B cell (primary cell): ENCODE measurements at regions of chr10 and their contacts with region 1.

Region 1: GRCh38 chr10:18625886-18626285 is 25.5 kb downstream of the NSUN6 start:
- DNase-seq: no peak
- ATAC-seq: no peak
- H3K4me3 ChIP-seq: no peak overlapping the region
- H3K4me3 Mint-ChIP-seq: peak overlapping the region; percentile 39
- H3K27ac ChIP-seq: no peak overlapping the region
- H3K27ac Mint-ChIP-seq: no peak overlapping the region
- H3K4me1 ChIP-seq: no peaks in the 10 kb centered on the region
- H3K4me1 Mint-ChIP-seq: peaks cover 10% of the 10 kb centered on the region
- H3K27me3 ChIP-seq: no peaks in the 10 kb centered on the region
- H3K27me3 Mint-ChIP-seq: no peaks in the 10 kb centered on the region
- CTCF ChIP-seq: no peak

Region 2: GRCh38 chr10:18523025-18523424 is 102.9 kb before region 1 on chr10:
- CTCF ChIA-PET with region 1: no interaction called
- POLR2A ChIA-PET with region 1: interaction called, 12 read pairs
- intact Hi-C with region 1: no loop called
- DNase-seq: no peak
- ATAC-seq: no peak
- H3K4me3 ChIP-seq: no peak overlapping the region
- H3K4me3 Mint-ChIP-seq: no peak overlapping the region
- H3K27ac ChIP-seq: no peak overlapping the region
- H3K27ac Mint-ChIP-seq: no peak overlapping the region
- H3K4me1 ChIP-seq: no peaks in the 10 kb centered on the region
- H3K4me1 Mint-ChIP-seq: no peaks in the 10 kb centered on the region
- H3K27me3 ChIP-seq: no peaks in the 10 kb centered on the region
- H3K27me3 Mint-ChIP-seq: no peaks in the 10 kb centered on the region
- CTCF ChIP-seq: no peak

Region 3: DNA sequence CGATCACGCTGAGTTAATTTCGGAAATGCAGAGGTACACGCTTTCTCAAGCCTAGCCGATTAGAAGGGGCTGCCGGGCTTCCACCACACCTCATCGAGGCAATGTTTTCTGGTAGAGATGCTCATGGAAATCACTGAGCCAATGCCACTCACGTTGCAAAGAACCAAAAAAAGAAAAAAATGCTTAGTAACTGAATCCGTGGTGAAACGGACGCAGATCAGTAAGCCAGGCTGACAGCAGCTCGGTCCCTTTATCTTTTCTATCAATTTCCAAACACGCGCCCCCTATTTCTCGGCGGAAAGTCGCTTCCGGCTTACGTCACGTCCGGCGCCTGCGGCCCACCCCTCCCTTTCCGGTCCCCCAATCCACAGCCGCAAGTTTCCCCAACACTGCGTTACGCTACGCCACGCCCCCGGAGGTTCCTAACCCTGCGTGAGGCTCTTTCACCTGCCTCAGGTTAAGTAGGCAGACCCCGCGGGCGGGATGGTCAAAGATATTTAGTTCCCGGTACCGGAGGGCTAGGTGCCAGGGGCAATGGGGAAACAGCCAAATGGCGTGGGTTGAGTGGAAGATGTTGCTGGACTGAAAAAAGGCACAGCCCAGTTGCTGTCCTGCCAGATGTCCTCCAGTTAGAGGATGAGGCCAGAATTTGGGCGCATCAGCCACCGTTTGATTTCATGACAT is 25.6 kb after region 1 on chr10 and contains the start of gene NSUN6:
- CTCF ChIA-PET with region 1: no interaction called
- POLR2A ChIA-PET with region 1: no interaction called
- intact Hi-C with region 1: loop called (anchors 2 kb)
- DNase-seq: peak; percentile 95
- ATAC-seq: peak; percentile 99
- H3K4me3 ChIP-seq: peak within 1 kb of the TSS; percentile 67 to 96 (median 91)
- H3K4me3 Mint-ChIP-seq: peak within 1 kb of the TSS; percentile 96
- H3K27ac ChIP-seq: peak within 1 kb of the TSS; percentile 79 to 84
- H3K27ac Mint-ChIP-seq: peak within 1 kb of the TSS; percentile 92
- H3K4me1 ChIP-seq: peaks cover 16 to 27% of the 10 kb centered on the region in 2 donors
- H3K4me1 Mint-ChIP-seq: peaks cover 36% of the 10 kb centered on the region
- H3K27me3 ChIP-seq: no peaks in the 10 kb centered on the region
- H3K27me3 Mint-ChIP-seq: no peaks in the 10 kb centered on the region
- CTCF ChIP-seq: no peak
- total RNA-seq, gene NSUN6: 27.9 and 29.2 TPM in 2 replicates